ENCODE measurements at regions of chr7 and their contacts with region 1.

Region 1: GRCh38 chr7:87398446-87398845 is 53.0 kb downstream of the CROT start:
- DNase-seq: peak; percentile 73
- ATAC-seq: peak; percentile 87
- H3K4me3 ChIP-seq: no peak overlapping the region
- H3K27ac ChIP-seq: no peak overlapping the region
- H3K4me1 ChIP-seq: peaks cover 29% of the 10 kb centered on the region
- H3K27me3 ChIP-seq: no peaks in the 10 kb centered on the region
- CTCF ChIP-seq: no peak

Region 2: DNA sequence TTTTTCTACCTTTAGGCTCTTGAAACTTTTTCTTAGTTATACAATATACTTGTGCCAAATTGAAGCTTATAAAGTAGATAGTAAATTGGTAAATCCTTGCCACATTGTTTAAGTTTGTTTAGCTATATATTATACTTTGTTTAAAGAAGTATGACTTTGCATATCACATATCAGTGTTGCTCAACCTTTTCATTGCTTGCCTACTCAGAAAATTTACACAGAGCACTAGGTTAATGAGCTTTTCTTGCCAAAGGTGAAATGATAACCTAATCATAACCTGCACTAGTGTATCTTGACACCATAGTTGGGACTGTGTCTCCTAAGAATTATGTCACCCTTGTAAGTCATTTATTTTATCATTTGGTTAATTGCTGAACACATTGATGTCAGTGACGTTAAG is 22.4 kb before region 1 on chr7:
- CTCF ChIA-PET with region 1: interaction called, 3 read pairs
- POLR2A ChIA-PET with region 1: no interaction called
- intact Hi-C with region 1: loop called (anchors 2 kb)
- DNase-seq: peak; percentile 17
- ATAC-seq: peak; percentile 85
- H3K4me3 ChIP-seq: no peak overlapping the region
- H3K27ac ChIP-seq: no peak overlapping the region
- H3K4me1 ChIP-seq: peaks cover 19% of the 10 kb centered on the region
- H3K27me3 ChIP-seq: no peaks in the 10 kb centered on the region
- CTCF ChIP-seq: no peak

Region 3: GRCh38 chr7:87416682-87417587 is 18.5 kb after region 1 on chr7:
- CTCF ChIA-PET with region 1: interaction called, 7 read pairs
- POLR2A ChIA-PET with region 1: interaction called, 7 read pairs
- intact Hi-C with region 1: loop called (anchors 1 kb)
- DNase-seq: peak; percentile 85
- ATAC-seq: 0 out of 2 replicates have a peak, but pooled peaks have one; percentile 11
- H3K4me3 ChIP-seq: no peak overlapping the region
- H3K27ac ChIP-seq: no peak overlapping the region
- H3K4me1 ChIP-seq: peaks cover 25% of the 10 kb centered on the region
- H3K27me3 ChIP-seq: 0 out of 2 replicates have a peak, but pooled peaks cover 7% of the 10 kb centered on the region
- CTCF ChIP-seq: peak; percentile 87

Measured in PC-3 (cell line).